MCF 10A (cell line): ENCODE measurements at regions of chr14 and their contacts with region 1.

Region 1: DNA sequence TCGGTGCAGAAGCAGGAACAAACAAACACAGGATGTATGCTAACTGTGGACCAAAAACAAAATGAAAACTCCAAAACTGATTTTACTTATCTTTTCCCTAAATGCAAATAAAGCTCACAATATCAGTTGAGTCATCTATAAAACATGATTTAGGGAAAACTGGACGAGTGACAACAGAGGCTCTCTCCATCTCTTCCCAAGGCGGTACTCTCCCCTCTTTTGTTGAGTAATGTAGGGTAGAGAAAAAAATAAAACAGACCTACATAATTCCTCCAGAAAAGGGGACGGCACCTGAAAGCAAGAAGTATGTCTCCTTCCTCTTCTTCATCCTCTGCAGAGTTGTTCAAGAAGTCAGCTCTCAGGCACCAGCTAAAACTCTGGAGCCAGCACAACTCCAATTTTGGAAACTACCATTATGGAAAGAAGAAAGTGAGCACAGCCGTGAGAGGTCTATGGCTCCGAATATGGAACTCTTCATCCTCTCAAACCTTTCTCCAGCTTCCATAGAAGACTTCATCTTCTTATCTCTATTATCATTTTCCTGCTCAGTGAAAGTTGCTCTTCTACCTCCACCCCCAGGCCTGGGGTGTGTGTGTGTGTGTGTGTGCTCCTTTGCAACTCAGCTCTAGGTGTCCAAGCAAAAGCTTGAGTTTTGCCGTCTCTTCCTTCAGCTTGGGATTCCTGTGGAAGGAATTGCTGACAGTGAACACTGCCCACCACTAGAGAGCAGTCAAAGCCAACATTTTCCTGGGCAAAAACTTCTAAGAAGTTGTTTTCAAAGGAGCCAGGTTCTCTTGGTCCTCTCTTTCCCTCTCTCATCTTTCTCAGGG is 155.4 kb downstream of the DIO2 start:
- DNase-seq: peak; percentile 64
- H3K4me3 Mint-ChIP-seq: no peak overlapping the region
- H3K27ac Mint-ChIP-seq: no peak overlapping the region
- H3K4me1 Mint-ChIP-seq: peaks cover 5% of the 10 kb centered on the region
- H3K27me3 Mint-ChIP-seq: no peaks in the 10 kb centered on the region
- CTCF ChIP-seq: peak; percentile 82

Region 2: GRCh38 chr14:80003138-80003537 is 52.7 kb before region 1 on chr14:
- CTCF ChIA-PET with region 1: no interaction called
- POLR2A ChIA-PET with region 1: no interaction called
- intact Hi-C with region 1: no loop called
- DNase-seq: no peak
- H3K4me3 Mint-ChIP-seq: no peak overlapping the region
- H3K27ac Mint-ChIP-seq: no peak overlapping the region
- H3K4me1 Mint-ChIP-seq: no peaks in the 10 kb centered on the region
- H3K27me3 Mint-ChIP-seq: no peaks in the 10 kb centered on the region
- CTCF ChIP-seq: no peak

Region 3: DNA sequence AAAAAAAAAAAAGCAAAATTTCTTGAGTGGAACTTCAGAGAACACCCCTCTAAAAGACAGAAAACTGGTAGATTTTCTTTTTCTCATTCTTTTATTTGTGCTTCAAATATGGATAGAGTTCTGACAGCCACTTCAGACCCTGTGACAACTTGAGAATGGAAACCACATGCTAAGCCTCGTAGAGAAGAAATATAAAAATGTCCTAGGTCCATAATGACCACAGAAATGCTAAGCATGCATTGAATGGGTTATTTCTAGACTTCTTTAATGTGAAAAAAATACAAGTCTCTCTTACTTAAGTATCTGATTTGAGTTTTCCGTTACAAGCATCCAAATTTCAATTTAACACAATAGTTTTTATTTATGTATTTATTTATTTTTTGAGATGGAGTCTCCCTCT is 183.7 kb after region 1 on chr14:
- CTCF ChIA-PET with region 1: no interaction called
- POLR2A ChIA-PET with region 1: no interaction called
- intact Hi-C with region 1: no loop called
- DNase-seq: no peak
- H3K4me3 Mint-ChIP-seq: no peak overlapping the region
- H3K27ac Mint-ChIP-seq: no peak overlapping the region
- H3K4me1 Mint-ChIP-seq: no peaks in the 10 kb centered on the region
- H3K27me3 Mint-ChIP-seq: no peaks in the 10 kb centered on the region
- CTCF ChIP-seq: no peak

Region 4: DNA sequence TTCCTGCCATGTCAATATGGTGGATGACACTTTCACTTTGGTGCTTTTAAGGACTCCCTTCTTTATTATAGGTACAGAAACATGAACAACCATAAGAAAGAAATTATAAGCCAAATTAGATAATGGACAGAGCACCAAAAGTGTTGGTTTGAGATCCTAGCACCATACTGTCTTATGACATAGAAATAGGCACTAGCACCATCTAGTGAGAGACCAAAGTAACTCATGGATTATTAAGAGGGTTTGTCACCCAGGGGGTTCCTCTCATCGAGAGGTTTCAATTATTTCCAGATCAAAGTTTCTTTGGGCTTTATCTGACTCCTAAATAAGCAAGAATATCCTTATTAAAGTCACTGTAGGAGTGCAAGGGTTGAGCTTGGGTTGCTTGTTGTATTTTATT is 308.4 kb after region 1 on chr14:
- CTCF ChIA-PET with region 1: interaction called, 10 read pairs
- POLR2A ChIA-PET with region 1: no interaction called
- intact Hi-C with region 1: loop called (anchors 1 kb)
- DNase-seq: peak; percentile 34
- H3K4me3 Mint-ChIP-seq: no peak overlapping the region
- H3K27ac Mint-ChIP-seq: no peak overlapping the region
- H3K4me1 Mint-ChIP-seq: no peaks in the 10 kb centered on the region
- H3K27me3 Mint-ChIP-seq: no peaks in the 10 kb centered on the region
- CTCF ChIP-seq: no peak

Region 5: DNA sequence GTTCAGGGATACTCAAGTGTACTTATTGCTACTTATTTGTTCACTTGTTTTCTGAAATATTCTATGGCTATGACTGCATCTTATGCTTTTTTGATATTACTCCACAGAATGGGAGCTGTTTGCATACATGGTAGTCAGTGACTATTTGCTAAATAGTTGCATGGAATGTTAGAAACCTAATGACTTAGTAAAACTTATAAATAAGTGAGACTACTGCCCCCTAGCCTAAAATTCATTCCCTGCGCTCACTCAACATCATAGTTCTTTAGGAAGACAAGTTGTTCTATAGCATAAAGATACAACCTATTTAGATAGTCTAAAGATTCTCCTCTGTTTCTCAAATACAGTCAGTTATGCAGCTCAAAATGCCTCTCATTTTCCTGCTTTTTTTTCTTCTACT is 580.2 kb after region 1 on chr14:
- CTCF ChIA-PET with region 1: interaction called, 10 read pairs
- POLR2A ChIA-PET with region 1: no interaction called
- intact Hi-C with region 1: no loop called
- DNase-seq: peak; percentile 38
- H3K4me3 Mint-ChIP-seq: no peak overlapping the region
- H3K27ac Mint-ChIP-seq: no peak overlapping the region
- H3K4me1 Mint-ChIP-seq: peaks cover 35% of the 10 kb centered on the region
- H3K27me3 Mint-ChIP-seq: no peaks in the 10 kb centered on the region
- CTCF ChIP-seq: peak; percentile 21

Region 6: GRCh38 chr14:80862983-80863382 is 807.1 kb after region 1 on chr14:
- CTCF ChIA-PET with region 1: interaction called, 26 read pairs
- POLR2A ChIA-PET with region 1: no interaction called
- intact Hi-C with region 1: no loop called
- DNase-seq: no peak
- H3K4me3 Mint-ChIP-seq: no peak overlapping the region
- H3K27ac Mint-ChIP-seq: no peak overlapping the region
- H3K4me1 Mint-ChIP-seq: no peaks in the 10 kb centered on the region
- H3K27me3 Mint-ChIP-seq: no peaks in the 10 kb centered on the region
- CTCF ChIP-seq: peak; percentile 27

Region 7: DNA sequence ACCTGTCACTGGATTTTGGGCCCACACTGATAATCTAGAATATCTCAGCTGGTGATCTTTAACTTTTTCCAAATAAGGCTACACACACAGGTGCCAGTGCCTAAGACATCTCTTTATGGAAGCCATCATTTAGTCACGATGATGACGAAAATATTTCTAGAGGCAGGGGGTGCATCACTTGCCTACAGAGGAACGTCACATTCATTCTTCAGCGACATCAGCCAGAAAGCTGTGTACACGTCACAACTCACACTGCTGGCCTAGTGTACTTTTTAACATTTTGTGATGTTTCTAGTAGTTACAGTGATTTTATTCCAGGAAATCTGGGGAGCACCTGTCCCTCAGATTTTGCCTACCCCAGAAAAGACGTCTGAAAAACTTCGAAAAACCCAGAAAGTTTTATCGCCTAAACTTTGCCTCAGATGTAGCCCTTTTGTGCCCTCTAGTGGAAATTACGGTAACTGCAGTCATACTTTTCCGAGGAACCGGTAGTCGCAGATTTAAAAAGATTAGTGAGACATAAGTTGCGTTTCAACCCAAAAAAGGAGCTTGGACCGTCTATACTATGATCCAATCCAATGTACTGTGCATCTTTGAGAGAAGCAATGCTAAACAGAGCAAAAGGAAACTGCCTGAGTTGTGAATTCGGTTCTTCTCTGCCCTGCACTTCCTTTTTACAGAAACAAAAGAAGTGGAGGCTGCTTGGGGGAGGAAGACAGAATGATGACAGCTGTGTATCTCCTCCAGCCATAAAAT is 1408.5 kb after region 1 on chr14:
- CTCF ChIA-PET with region 1: no interaction called
- POLR2A ChIA-PET with region 1: no interaction called
- intact Hi-C with region 1: loop called (anchors 10 kb)
- DNase-seq: peak; percentile 75
- H3K4me3 Mint-ChIP-seq: peak overlapping the region; percentile 40
- H3K27ac Mint-ChIP-seq: no peak overlapping the region
- H3K4me1 Mint-ChIP-seq: no peaks in the 10 kb centered on the region
- H3K27me3 Mint-ChIP-seq: no peaks in the 10 kb centered on the region
- CTCF ChIP-seq: peak; percentile 67